Mammary epithelial cell (primary cell): ENCODE measurements at regions of chr11 and their contacts with region 1.

Region 1: DNA sequence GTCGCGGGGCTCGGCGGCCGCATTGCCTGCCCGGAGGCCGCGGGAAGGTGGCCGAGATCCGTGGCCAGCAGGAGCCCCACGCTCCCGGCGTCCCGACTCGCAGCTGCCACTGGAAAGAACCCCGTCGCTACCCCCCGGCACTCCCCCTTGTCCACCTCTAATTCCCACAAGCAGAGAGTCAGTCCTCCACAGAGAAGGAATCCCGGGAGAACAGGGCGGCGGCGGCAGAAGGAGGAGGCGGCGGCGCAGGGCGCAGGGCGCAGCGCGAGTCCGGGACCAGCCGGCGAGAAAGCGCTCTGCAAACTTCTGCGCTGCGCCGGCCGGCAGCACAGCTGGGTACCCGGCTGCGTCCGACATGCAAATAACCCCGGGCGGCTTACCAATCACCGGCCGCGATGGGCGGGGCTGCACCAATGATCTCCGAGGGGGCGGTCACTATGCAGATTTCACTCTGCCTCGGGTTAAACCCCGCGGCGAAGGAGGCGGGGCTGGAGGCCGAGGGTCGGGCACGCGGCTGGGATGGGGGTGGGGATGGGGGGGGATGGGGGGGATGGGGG is at the start of gene ABTB2:
- DNase-seq: peak; percentile 96
- H3K4me3 ChIP-seq: peak within 1 kb of the TSS; percentile 56 to 67 (median 64)
- H3K27ac ChIP-seq: peak within 1 kb of the TSS; percentile 46
- H3K4me1 ChIP-seq: peaks cover 33% of the 10 kb centered on the region
- H3K27me3 ChIP-seq: no peaks in the 10 kb centered on the region
- CTCF ChIP-seq: no peak
- total RNA-seq, gene ABTB2: 5.1 to 8.0 TPM

Region 2: GRCh38 chr11:33835143-33835878 is 522.5 kb before region 1 on chr11:
- CTCF ChIA-PET with region 1: no interaction called
- dilution Hi-C with region 1: no loop called
- in situ Hi-C with region 1: no loop called
- intact Hi-C with region 1: loop called (anchors 1 kb)
- DNase-seq: peak; percentile 76
- H3K4me3 ChIP-seq: no peak overlapping the region
- H3K27ac ChIP-seq: no peak overlapping the region
- H3K4me1 ChIP-seq: peaks cover 17% of the 10 kb centered on the region
- H3K27me3 ChIP-seq: no peaks in the 10 kb centered on the region
- CTCF ChIP-seq: peak; percentile 23 to 41

Region 3: DNA sequence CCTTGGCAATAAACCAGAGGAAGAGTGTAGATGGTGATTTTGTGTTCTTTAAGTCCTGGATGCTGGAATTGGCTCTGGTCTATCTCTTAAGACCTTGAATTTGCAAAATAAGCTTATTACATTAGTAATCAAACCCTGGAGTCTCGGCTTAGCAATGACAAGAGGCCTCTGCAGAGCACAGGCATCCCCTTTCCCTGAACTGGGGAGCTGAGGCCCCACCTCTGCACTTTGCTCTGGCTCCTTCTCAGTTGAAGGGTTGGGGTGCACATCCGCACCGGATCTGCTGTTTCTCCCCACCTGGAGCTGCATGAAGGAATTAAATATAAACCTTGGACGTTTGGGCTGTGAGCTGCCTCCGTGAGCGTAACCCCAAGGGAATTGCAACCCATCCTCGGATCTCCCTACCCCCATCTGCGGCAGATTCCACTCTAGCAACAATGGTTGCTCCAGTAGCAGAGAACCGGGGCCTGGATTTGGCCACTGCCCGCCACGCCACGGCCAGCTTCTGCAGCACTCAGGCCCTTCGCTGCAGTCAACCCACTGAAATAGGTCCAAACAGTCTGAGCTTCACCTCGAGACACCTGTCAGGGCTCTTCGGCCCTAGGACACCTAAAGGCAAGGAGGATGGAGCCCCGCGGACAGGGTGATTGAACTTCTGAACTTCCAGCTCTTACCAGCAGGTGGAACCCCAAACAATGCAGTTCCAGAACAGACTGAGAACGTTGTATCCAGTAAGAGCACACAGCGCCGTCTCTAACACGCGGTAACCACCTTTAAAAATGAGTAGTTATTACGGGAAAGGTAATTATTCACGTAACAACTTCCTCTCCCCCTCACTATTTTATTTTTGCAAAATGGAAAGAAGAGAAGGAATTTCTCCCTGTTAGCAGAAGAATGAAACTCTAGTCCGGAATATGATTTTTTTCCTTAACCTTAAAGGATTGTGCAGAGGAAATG is 361.0 kb before region 1 on chr11:
- CTCF ChIA-PET with region 1: no interaction called
- dilution Hi-C with region 1: no loop called
- in situ Hi-C with region 1: loop called (anchors 10 to 25 kb)
- intact Hi-C with region 1: loop called (anchors 1 kb)
- DNase-seq: peak; percentile 69
- H3K4me3 ChIP-seq: no peak overlapping the region
- H3K27ac ChIP-seq: no peak overlapping the region
- H3K4me1 ChIP-seq: peaks cover 9% of the 10 kb centered on the region
- H3K27me3 ChIP-seq: no peaks in the 10 kb centered on the region
- CTCF ChIP-seq: peak; percentile 81 to 86

Region 4: DNA sequence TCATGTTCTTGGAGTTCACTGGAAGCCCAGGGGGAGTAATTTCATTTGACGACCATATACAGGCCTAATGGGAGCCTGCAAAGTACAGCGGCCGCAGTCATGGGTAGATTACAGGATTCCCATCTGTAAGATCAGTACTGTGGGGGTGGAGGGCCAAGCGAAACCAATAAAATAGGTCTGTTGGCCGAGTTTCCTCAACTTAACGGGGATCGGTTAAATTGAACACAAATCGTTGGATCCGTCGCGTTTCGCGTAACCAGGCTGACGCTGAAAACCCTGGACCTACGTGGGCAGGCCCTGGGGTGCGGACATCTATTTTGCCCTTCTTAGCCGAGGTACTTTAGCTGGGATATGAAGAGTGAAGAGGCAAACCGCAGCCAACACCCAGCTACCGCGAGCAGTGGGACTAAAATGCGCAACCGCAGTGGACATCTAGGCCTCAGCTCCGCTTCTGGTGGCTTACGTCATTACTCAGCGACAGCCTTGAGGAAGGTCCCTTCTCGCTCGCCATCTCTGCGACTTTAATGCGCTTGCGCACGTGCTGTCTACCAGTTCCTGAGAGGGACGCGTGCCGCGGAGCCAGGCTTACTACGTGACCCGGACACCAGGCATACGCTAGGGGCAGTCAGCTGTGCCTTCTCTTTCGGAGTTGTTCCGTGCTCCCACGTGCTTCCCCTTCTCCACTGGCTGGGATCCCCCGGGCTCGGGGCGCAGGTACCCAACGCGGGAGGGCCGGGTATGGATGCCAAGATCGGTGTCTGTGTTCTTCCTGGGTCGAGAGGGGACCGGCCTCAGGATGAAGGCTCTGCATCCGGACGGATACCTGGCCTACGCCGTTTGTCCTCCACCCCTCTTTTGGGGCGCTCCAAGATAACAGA is 252.5 kb before region 1 on chr11 and contains the start of gene NAT10:
- CTCF ChIA-PET with region 1: no interaction called
- dilution Hi-C with region 1: no loop called
- in situ Hi-C with region 1: no loop called
- intact Hi-C with region 1: loop called (anchors 2 kb)
- DNase-seq: peak; percentile 99
- H3K4me3 ChIP-seq: peak within 1 kb of the TSS; percentile 58 to 77 (median 76)
- H3K27ac ChIP-seq: peak within 1 kb of the TSS; percentile 87
- H3K4me1 ChIP-seq: peaks cover 12% of the 10 kb centered on the region
- H3K27me3 ChIP-seq: no peaks in the 10 kb centered on the region
- CTCF ChIP-seq: peak in 1 of 2 donors; percentile 29
- total RNA-seq, gene NAT10: 28.2 to 71.5 TPM

Region 5: GRCh38 chr11:34174412-34175041 is 183.3 kb before region 1 on chr11:
- CTCF ChIA-PET with region 1: interaction called, 23 read pairs
- dilution Hi-C with region 1: no loop called
- in situ Hi-C with region 1: loop called in 1 of 2 experiments (anchors 5 kb)
- intact Hi-C with region 1: loop called (anchors 1 kb)
- DNase-seq: peak; percentile 61
- H3K4me3 ChIP-seq: peak overlapping the region; percentile 28 to 34 (median 29)
- H3K27ac ChIP-seq: no peak overlapping the region
- H3K4me1 ChIP-seq: peaks cover 12% of the 10 kb centered on the region
- H3K27me3 ChIP-seq: no peaks in the 10 kb centered on the region
- CTCF ChIP-seq: peak; percentile 85 to 99

Region 6: GRCh38 chr11:34266090-34266912 is 91.5 kb before region 1 on chr11:
- CTCF ChIA-PET with region 1: no interaction called
- dilution Hi-C with region 1: no loop called
- in situ Hi-C with region 1: no loop called
- intact Hi-C with region 1: loop called (anchors 2 kb)
- DNase-seq: peak; percentile 92
- H3K4me3 ChIP-seq: no peak overlapping the region
- H3K27ac ChIP-seq: no peak overlapping the region
- H3K4me1 ChIP-seq: peaks cover 25% of the 10 kb centered on the region
- H3K27me3 ChIP-seq: no peaks in the 10 kb centered on the region
- CTCF ChIP-seq: no peak

Region 7: GRCh38 chr11:34468209-34468841 is 110.5 kb after region 1 on chr11:
- CTCF ChIA-PET with region 1: no interaction called
- dilution Hi-C with region 1: no loop called
- in situ Hi-C with region 1: no loop called
- intact Hi-C with region 1: loop called (anchors 2 kb)
- DNase-seq: peak; percentile 19
- H3K4me3 ChIP-seq: no peak overlapping the region
- H3K27ac ChIP-seq: no peak overlapping the region
- H3K4me1 ChIP-seq: no peaks in the 10 kb centered on the region
- H3K27me3 ChIP-seq: no peaks in the 10 kb centered on the region
- CTCF ChIP-seq: peak; percentile 85 to 91